IMR-90 (cell line): ENCODE measurements at regions of chr2 and their contacts with region 1.

Region 1: GRCh38 chr2:48589170-48589767 is 28.4 kb upstream of the GTF2A1L start:
- DNase-seq: peak; percentile 59
- ATAC-seq: peak; percentile 62
- H3K4me3 ChIP-seq: no peak overlapping the region
- H3K27ac ChIP-seq: no peak overlapping the region
- H3K4me1 ChIP-seq: peaks cover 2% of the 10 kb centered on the region
- H3K27me3 ChIP-seq: no peaks in the 10 kb centered on the region
- CTCF ChIP-seq: peak; percentile 85
- POLR2A ChIP-seq: no peak
- RAD21 ChIP-seq: peak; percentile 82

Region 2: DNA sequence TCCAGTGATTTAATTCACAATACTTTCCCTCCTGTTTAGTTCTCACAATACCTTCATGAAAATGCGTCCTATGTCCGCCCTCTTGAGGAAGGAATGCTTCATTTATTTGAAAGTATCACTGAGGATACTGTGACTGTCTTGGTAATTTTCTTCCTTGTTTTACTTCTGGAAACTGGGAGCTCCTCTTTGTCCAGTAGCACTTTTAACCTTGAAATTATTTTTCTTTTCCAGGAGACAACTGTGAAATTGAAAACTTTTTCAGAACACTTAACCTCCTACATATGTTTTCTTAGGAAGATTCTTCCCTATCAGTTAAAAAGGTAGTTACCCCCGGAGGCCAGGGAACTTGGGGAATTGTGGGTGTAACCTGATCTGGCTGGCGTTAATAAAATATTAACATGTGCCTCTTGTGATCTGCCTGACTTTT is 118.2 kb before region 1 on chr2:
- CTCF ChIA-PET with region 1: interaction called, 8 read pairs
- POLR2A ChIA-PET with region 1: no interaction called
- dilution Hi-C with region 1: no loop called
- in situ Hi-C with region 1: loop called (anchors 10 kb)
- intact Hi-C with region 1: loop called (anchors 1 kb)
- DNase-seq: peak; percentile 78
- ATAC-seq: peak; percentile 89
- H3K4me3 ChIP-seq: no peak overlapping the region
- H3K27ac ChIP-seq: no peak overlapping the region
- H3K4me1 ChIP-seq: 0 out of 2 replicates have a peak, but pooled peaks cover 1% of the 10 kb centered on the region
- H3K27me3 ChIP-seq: no peaks in the 10 kb centered on the region
- CTCF ChIP-seq: peak; percentile 84
- POLR2A ChIP-seq: no peak
- RAD21 ChIP-seq: peak; percentile 73